Caco-2 (cell line): ENCODE measurements at regions of chr6 and their contacts with region 1.

Region 1: DNA sequence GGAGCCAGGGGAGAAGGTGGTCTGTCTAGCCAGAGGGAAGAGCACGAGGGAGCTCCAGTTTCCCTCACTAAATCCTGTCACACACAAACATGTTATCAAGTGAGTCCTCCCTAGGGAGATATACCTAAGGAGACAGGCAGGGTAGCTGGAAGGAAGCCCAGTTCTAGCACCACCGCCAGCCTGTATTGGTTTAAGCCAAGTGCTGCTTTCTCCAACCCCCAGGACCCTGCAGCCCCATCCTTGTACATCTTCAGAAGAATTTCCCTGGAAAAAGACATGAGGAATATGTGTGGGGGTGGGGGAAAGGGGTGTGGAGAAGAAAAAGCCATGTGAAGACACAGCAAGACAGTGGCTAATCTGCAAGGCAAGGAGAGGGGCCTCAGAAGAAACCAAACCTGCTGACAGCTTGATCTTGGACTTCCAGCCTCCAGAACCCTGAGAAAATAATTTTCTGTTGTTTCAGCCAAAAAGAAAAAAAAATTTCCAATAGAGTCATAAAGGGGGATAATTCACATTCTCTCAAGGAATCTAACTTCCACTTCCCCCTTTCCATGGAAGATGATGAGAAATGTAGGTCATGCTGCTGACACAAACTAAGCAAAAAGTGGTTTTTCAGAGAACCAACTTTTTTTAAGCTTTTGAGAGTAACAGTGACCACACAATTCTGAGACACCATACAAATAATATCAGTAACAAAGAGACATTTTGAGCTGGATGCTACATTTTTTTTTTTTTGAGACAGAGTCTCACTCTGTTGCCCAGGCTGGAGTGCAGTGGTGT is 103.2 kb upstream of the PRDM1 start:
- DNase-seq: no peak
- H3K4me3 ChIP-seq: no peak overlapping the region
- H3K4me3 Mint-ChIP-seq: no peak overlapping the region
- H3K27ac Mint-ChIP-seq: no peak overlapping the region
- H3K4me1 ChIP-seq: peaks cover 8% of the 10 kb centered on the region
- H3K4me1 Mint-ChIP-seq: peaks cover 21% of the 10 kb centered on the region
- H3K27me3 ChIP-seq: no peaks in the 10 kb centered on the region
- H3K27me3 Mint-ChIP-seq: no peaks in the 10 kb centered on the region
- CTCF ChIP-seq: no peak

Region 2: DNA sequence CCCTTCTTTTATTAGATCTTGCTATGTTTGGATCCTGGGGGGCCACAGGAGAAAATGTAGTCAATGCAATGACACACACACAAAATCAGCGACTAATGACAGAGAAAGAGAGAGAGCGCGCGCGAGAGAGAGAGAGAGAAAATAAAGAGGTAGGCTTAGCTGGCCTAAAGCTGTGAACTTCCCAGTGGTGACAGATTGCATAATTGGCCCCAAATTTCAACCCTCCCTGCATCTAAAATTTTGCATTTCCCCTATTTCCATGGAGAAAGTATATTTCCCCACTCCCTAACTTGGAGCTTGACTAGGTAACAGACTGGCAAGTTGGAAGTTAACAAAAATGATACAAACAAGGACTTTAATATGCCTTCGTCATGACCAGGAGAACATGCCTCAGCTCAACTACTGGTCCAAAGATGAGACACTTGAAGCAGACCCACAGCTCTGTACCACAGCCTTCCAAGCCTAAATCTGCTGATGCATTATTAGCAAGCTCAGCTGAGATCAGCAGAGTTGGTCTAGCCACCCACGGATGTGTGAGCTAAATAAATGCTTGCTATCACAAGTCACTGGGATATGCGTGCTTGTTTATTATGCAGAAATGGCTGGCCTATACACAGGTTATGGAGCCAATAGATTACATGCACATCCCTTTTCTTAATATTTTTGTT is 14.9 kb before region 1 on chr6:
- CTCF ChIA-PET with region 1: no interaction called
- POLR2A ChIA-PET with region 1: no interaction called
- intact Hi-C with region 1: loop called (anchors 2 kb)
- DNase-seq: no peak
- H3K4me3 ChIP-seq: no peak overlapping the region
- H3K4me3 Mint-ChIP-seq: no peak overlapping the region
- H3K27ac Mint-ChIP-seq: peak overlapping the region; percentile 16
- H3K4me1 ChIP-seq: peaks cover 22% of the 10 kb centered on the region
- H3K4me1 Mint-ChIP-seq: peaks cover 24% of the 10 kb centered on the region
- H3K27me3 ChIP-seq: no peaks in the 10 kb centered on the region
- H3K27me3 Mint-ChIP-seq: no peaks in the 10 kb centered on the region
- CTCF ChIP-seq: no peak